A673 (cell line): ENCODE measurements at regions of chr10 and their contacts with region 1.

Region 1: GRCh38 chr10:48257407-48257961 is 17.0 kb downstream of the FRMPD2 start:
- DNase-seq: no peak
- H3K4me3 ChIP-seq: no peak overlapping the region
- H3K27ac ChIP-seq: no peak overlapping the region
- H3K4me1 ChIP-seq: peaks cover 8% of the 10 kb centered on the region
- H3K27me3 ChIP-seq: no peaks in the 10 kb centered on the region
- CTCF ChIP-seq: no peak

Region 2: DNA sequence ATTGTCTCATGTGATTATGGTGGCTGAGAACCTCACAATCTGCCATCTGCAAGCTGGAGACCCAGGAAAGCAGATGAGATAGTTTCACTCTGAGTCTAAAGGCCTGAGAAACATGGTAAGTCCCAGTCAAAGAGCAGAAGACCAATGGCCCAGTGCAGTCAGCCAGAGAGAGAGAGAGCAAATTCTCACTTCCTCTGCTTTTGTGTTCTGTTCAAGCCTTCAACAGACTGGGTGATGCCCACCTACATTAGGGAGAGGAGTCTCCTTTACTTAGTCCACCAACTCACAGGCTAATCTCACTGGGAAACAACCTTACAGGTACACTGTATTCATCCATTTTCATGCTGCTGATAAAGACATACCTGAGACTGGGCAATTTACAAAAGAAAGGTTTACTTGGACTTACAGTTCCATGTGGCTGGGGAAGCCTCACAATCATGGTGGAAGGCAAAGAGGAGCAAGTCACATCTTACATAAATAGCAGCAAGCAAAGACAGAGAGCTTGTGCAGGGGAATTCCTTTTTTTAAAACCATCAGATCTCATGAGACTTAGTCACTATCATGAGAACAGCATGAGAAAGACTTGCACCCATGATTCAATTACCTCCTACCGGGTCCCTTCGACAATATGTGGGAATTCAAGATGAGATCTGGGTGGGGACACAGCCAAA is 21.7 kb after region 1 on chr10:
- CTCF ChIA-PET with region 1: no interaction called
- POLR2A ChIA-PET with region 1: no interaction called
- intact Hi-C with region 1: loop called (anchors 1 kb)
- DNase-seq: no peak
- H3K4me3 ChIP-seq: no peak overlapping the region
- H3K27ac ChIP-seq: no peak overlapping the region
- H3K4me1 ChIP-seq: no peaks in the 10 kb centered on the region
- H3K27me3 ChIP-seq: no peaks in the 10 kb centered on the region
- CTCF ChIP-seq: no peak

Region 3: DNA sequence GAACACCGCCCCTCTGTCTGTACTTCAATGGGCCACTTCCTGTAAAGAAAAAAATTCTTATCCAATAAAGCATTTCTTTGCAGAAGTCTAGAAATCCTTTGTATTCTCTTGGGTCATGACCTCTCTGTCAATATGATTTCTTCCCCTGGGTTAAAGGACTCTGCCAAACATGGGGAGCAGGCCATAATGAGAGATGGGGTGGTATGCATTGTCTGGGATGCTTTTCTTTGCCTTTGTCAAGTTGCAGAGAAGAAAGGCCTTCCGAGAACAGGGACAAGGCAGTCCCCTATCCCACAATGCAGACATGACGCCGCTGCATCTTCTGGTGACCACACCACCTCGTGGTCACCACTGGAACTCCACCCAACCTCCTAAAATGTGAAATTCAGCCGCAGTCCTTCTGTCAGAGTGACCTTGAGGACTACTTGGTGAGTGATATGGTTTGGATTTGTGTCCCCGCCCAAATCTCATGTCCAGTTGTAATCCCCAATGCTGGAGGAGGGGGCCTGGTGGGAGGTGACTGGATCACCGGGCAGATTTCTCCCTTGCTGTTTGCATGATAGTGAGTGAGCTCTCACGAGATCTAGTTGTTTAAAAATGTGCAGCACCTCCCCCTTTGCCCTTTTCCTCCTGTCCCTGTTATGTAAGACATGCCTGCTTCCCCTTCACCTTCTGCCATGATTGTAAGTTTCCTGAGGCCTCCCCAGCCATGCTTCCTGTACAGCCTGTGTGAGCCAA is 32.2 kb after region 1 on chr10:
- CTCF ChIA-PET with region 1: no interaction called
- POLR2A ChIA-PET with region 1: no interaction called
- intact Hi-C with region 1: no loop called
- DNase-seq: peak; percentile 72
- H3K4me3 ChIP-seq: no peak overlapping the region
- H3K27ac ChIP-seq: no peak overlapping the region
- H3K4me1 ChIP-seq: peaks cover 4% of the 10 kb centered on the region
- H3K27me3 ChIP-seq: no peaks in the 10 kb centered on the region
- CTCF ChIP-seq: peak; percentile 80